Activated CD8-positive, alpha-beta T cell treated with anti-CD3 and anti-CD28 coated beads for 36 hours (primary cell): ENCODE measurements at regions of chr17 and their contacts with region 1.

Region 1: DNA sequence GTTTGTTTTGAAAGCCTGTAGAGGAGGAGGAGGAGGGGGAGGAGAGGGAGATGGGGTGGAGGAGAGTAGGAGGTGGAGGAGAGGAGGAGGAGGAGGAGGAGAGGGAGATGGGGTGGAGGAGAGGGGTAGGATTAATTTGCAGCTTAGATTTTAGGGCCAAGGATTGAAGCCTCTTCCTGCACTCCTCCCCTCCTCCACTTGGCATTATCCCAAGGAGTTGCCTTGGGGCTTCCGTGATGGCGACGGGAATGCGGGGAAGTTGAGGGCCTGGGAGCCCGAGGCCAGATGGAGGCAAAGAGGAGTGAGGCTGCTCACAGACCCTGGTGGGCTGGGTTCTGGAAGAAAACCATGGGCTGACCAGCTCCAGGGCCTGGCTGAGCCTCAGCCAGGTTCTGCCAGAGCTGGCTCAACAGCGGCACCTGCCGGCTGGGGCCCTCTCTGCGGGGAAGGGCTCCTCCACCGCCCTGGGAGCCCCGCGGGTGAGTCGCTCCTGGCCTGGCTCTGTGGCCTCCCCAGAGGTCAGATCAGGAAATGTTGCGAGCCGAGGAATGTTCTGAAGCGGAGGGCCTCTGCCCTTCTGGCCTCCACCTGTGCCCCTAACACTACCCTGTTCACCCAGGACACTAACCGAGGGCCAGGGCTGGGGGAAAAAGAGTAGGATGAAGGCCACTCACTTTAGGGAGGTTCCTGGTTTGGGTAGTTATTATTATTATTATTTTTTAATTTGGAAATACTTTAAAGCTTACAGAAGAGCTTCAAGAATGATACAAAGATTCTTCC is 23.9 kb upstream of the FMNL1 start:
- DNase-seq: peak; percentile 91
- ATAC-seq: peak; percentile 100
- H3K4me3 Mint-ChIP-seq: no peak overlapping the region
- H3K27ac Mint-ChIP-seq: no peak overlapping the region
- H3K4me1 Mint-ChIP-seq: peaks cover 5% of the 10 kb centered on the region
- H3K27me3 Mint-ChIP-seq: no peaks in the 10 kb centered on the region
- CTCF ChIP-seq: peak; percentile 99

Region 2: DNA sequence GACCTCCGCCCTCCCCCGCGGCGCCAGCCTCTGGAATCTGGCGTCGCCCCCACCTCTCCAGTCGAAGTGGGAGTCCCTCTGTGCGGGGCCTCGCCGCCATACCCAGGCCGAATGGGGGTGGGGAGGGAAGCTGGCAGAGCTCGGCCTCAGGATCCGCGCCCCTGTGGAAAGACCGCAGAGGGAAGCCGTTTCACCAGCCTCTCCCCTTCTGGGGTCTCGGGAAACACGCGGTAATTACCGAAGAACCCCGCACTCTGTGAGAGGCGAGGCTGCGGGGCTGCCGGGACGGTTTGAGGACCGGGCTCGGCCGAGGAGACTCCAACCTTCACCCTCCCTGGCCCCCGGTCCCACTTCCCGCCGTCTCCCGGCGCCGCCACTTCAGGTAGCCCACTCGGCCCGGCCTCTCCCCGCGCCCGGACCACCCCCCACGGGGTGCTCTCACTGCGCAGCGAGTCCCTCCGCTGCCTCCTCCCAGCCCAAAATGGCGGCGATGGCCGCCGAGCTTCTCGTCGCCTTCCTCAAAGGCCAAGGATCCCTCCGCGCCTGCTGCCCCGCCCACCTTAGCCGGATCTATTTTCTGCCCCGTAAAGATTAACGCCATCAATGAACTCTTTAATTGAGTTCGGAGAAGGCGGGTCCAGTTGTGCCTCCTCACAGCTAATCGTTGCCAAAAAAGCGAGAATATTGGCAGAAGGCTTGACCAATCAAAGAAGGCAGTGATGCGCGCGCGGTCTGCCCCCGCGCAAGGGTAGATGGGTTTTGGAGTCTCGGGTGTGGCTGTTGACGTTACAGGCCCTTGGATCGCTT is 36.5 kb before region 1 on chr17:
- CTCF ChIA-PET with region 1: interaction called, 60 read pairs
- POLR2A ChIA-PET with region 1: interaction called, 3 read pairs
- intact Hi-C with region 1: no loop called
- DNase-seq: peak; percentile 99
- ATAC-seq: peak; percentile 97
- H3K4me3 Mint-ChIP-seq: peak overlapping the region; percentile 95
- H3K27ac Mint-ChIP-seq: peak overlapping the region; percentile 99
- H3K4me1 Mint-ChIP-seq: peaks cover 39% of the 10 kb centered on the region
- H3K27me3 Mint-ChIP-seq: no peaks in the 10 kb centered on the region
- CTCF ChIP-seq: no peak

Region 3: GRCh38 chr17:45172454-45173286 is 25.1 kb before region 1 on chr17:
- CTCF ChIA-PET with region 1: interaction called, 49 read pairs
- POLR2A ChIA-PET with region 1: interaction called, 3 read pairs
- intact Hi-C with region 1: no loop called
- DNase-seq: peak; percentile 77
- ATAC-seq: peak; percentile 78
- H3K4me3 Mint-ChIP-seq: peak overlapping the region; percentile 68
- H3K27ac Mint-ChIP-seq: peak overlapping the region; percentile 89
- H3K4me1 Mint-ChIP-seq: peaks cover 25% of the 10 kb centered on the region
- H3K27me3 Mint-ChIP-seq: no peaks in the 10 kb centered on the region
- CTCF ChIP-seq: no peak

Region 4: DNA sequence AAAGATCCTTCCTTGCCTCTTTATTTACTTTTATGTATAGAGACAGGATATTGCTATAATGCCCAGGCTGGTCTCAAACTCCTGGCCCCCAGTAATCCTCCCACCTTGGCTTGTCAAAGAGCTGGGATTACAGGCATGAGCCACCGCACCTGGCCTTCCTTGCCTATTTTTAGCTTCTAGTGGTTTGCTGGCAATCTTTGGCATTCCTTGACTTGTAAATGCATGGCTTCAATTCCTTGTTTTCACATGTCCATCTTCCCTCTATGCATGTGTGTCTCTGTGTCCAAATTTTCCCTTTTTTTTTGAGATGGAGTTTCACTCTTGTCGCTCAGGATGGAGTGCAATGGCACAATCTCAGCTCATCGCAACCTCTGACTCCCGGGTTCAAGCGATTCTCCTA is 13.6 kb before region 1 on chr17:
- CTCF ChIA-PET with region 1: interaction called, 15 read pairs
- POLR2A ChIA-PET with region 1: no interaction called
- intact Hi-C with region 1: no loop called
- DNase-seq: no peak
- ATAC-seq: no peak
- H3K4me3 Mint-ChIP-seq: no peak overlapping the region
- H3K27ac Mint-ChIP-seq: no peak overlapping the region
- H3K4me1 Mint-ChIP-seq: no peaks in the 10 kb centered on the region
- H3K27me3 Mint-ChIP-seq: no peaks in the 10 kb centered on the region
- CTCF ChIP-seq: no peak

Region 5: GRCh38 chr17:45262516-45263476 is 65.1 kb after region 1 on chr17:
- CTCF ChIA-PET with region 1: no interaction called
- POLR2A ChIA-PET with region 1: no interaction called
- intact Hi-C with region 1: no loop called
- DNase-seq: no peak
- ATAC-seq: peak; percentile 9
- H3K4me3 Mint-ChIP-seq: peak overlapping the region; percentile 76
- H3K27ac Mint-ChIP-seq: peak overlapping the region; percentile 85
- H3K4me1 Mint-ChIP-seq: peaks cover 34% of the 10 kb centered on the region
- H3K27me3 Mint-ChIP-seq: no peaks in the 10 kb centered on the region
- CTCF ChIP-seq: no peak